Ascending aorta (tissue), 2 donors: ENCODE measurements at regions of chr16 and their contacts with region 1.

Region 1: GRCh38 chr16:24539291-24539849 is at the start of gene RBBP6:
- DNase-seq: peak; percentile 84 to 97
- H3K4me3 ChIP-seq: peak within 1 kb of the TSS; percentile 80 to 100
- H3K27ac ChIP-seq: peak within 1 kb of the TSS; percentile 98 to 100
- H3K4me1 ChIP-seq: peaks cover 0 to 14% of the 10 kb centered on the region in 2 donors
- H3K27me3 ChIP-seq: no peaks in the 10 kb centered on the region
- CTCF ChIP-seq: peak; percentile 24 to 46 (median 30)
- total RNA-seq, gene RBBP6: 96.1 TPM

Region 2: DNA sequence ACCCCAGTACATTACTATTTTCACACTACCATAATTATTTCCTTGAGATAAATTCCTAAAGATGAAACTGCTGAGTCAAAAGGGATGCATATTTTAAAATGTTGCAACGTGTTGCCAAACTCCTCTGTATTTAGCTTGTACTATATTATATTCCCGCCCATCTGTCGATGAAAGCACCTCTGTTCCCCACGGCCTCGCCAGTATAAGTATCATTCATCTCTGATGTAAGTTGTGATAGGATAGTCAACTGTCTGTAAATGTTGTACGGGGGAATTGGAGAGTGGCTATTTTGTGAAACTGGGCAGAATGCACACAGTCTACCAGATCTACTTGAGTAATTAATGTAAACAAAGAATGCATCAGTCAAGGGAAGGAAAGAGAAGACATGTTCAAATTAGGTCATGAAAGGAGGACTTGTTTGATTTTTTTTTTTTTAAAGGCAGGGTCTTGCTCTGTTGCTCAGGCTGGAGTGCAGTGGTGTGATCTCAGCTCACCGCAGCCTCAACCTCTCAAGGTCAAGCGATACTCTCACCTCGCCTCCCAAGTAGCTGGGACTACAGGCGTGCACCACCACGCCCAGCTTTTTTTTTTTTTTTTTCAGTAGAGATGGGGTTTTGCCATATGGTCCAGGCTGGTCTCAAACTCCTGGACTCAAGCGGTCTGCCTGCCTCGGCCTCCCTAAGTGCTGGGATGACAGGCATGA is 142.6 kb after region 1 on chr16:
- intact Hi-C with region 1: no loop called
- DNase-seq: no peak
- H3K4me3 ChIP-seq: no peak overlapping the region
- H3K27ac ChIP-seq: no peak overlapping the region
- H3K4me1 ChIP-seq: peaks cover 7 to 14% of the 10 kb centered on the region in 2 donors
- H3K27me3 ChIP-seq: no peaks in the 10 kb centered on the region
- CTCF ChIP-seq: no peak

Region 3: DNA sequence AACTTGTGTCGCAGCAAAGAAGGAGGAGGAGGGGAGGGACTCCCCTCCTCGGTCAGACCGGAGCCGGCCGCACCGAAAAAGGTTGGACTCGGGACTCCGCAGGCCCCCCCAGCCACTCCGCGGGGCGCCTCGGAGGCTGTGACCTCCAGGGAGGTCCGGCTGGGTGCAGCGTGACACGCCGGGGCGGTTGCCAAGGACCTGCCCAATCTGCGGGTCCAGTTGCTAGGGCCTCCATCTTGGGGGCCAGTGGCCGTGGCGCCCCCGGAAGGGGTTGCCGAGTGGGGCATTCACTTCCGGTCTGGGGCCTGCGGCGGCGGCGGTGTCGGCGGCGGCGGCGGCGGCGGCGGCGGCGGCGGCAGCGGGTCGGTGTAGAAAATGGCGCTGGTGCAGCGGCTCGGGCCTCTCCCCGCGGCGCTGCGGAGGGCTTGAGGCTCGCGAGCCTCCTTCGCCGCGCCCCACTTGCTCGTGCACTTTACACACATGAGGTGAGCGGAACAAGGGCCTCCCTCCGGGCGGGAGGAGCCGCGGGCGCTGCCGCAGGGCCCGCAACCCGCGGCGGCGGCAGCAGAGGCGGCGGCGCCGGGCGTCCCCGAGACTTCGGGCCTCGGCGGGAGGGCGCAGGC is 190.1 kb after region 1 on chr16 and contains the start of gene TNRC6A:
- intact Hi-C with region 1: loop called (anchors 5 kb)
- DNase-seq: peak; percentile 64 to 95
- H3K4me3 ChIP-seq: peak within 1 kb of the TSS; percentile 86 to 93
- H3K27ac ChIP-seq: peak within 1 kb of the TSS; percentile 97 to 98
- H3K4me1 ChIP-seq: peaks cover 6 to 25% of the 10 kb centered on the region in 2 donors
- H3K27me3 ChIP-seq: no peaks in the 10 kb centered on the region
- CTCF ChIP-seq: no peak
- total RNA-seq, gene TNRC6A: 36.7 TPM